ENCODE measurements at regions of chr1 and their contacts with region 1.

Region 1: DNA sequence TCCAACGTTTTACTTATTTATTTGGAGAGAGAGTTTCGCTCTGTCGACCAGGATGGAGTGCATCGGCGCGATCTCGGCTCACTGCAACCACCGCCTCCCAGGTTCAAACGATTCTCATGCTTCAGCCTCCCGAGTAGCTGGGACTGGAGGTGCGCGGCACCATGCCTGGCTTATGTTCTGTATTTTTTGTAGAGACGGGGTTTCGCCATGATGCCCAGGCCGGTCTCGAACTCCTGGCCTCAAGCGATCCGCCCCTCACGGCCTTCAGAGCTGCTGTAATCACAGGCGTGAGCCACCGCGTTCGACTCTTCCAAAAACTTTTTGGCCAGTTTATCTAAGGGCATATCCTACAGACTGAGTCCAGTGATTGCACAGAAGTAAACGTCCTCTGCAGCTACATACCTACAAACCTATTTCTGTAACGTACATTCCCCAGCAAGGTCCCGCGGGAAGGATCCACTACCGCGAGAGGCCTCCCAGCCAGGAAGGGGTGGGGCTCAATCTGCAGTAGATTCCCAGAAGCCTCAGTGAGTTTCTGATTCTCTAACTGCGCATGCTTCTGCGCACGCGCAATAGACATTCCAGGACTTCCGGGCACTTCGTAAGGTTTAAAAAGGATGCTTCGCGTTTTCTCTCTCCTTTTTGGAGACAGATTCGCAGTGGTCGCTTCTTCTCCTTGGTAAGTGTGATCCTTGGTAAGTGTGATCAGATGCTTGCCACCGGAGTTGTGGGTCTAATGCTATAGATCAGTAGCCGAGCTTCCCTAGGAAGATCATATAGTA is at the start of gene RCC1:
- DNase-seq: peak; percentile 93 to 98
- ATAC-seq: peak; percentile 96 to 99 (median 98)
- H3K4me3 ChIP-seq: peak within 1 kb of the TSS; percentile 54 to 90 (median 78)
- H3K27ac ChIP-seq: peak within 1 kb of the TSS; percentile 21 to 95 (median 87)
- H3K4me1 ChIP-seq: peaks cover 9 to 48% (median 42%) of the 10 kb centered on the region in 9 donors
- H3K27me3 ChIP-seq: no peaks in the 10 kb centered on the region
- CTCF ChIP-seq: no peak
- total RNA-seq, gene RCC1: 2.3 to 17.8 (median 3.9) TPM

Region 2: GRCh38 chr1:28437934-28438699 is 67.5 kb before region 1 on chr1:
- intact Hi-C with region 1: loop called in 1 of 10 experiments (anchors 5 kb)
- DNase-seq: peak; percentile 54 to 82
- ATAC-seq: peak; percentile 97 to 100 (median 98)
- H3K4me3 ChIP-seq: peak overlapping the region in 9 of 10 donors; percentile 15 to 58 (median 44)
- H3K27ac ChIP-seq: peak overlapping the region; percentile 44 to 84 (median 78)
- H3K4me1 ChIP-seq: peaks cover 9 to 37% (median 29%) of the 10 kb centered on the region in 9 donors
- H3K27me3 ChIP-seq: no peaks in the 10 kb centered on the region
- CTCF ChIP-seq: no peak

Measured in heart right ventricle (tissue), 16 donors.